MCF 10A (cell line): ENCODE measurements at regions of chr16 and their contacts with region 1.

Region 1: DNA sequence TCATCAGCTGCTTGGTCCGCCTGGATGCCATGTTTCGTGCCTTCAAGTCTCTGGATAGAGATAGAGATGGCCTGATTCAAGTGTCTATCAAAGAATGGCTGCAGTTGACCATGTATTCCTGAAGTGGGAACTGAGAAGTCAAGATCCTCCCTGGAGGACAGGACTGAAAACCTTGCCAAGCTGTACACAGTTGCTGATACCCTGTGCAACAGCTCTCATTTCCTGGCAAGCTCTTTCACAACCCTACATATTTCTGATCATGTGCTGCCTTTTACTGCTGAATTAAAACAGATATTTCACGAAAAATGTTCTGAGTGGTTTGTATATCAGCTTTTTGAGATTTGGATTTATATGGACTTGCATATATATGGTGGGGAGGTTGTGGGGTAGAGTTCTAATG is 898 bp downstream of the CAPNS2 start:
- DNase-seq: peak; percentile 73
- H3K4me3 Mint-ChIP-seq: peak overlapping the region; percentile 59
- H3K27ac Mint-ChIP-seq: peak overlapping the region; percentile 97
- H3K4me1 Mint-ChIP-seq: peaks cover 50% of the 10 kb centered on the region
- H3K27me3 Mint-ChIP-seq: no peaks in the 10 kb centered on the region
- CTCF ChIP-seq: no peak

Region 2: GRCh38 chr16:55552621-55553020 is 14.8 kb before region 1 on chr16:
- CTCF ChIA-PET with region 1: interaction called, 7 read pairs
- POLR2A ChIA-PET with region 1: interaction called, 58 read pairs
- intact Hi-C with region 1: no loop called
- DNase-seq: peak; percentile 78
- H3K4me3 Mint-ChIP-seq: no peak overlapping the region
- H3K27ac Mint-ChIP-seq: peak overlapping the region; percentile 49
- H3K4me1 Mint-ChIP-seq: peaks cover 28% of the 10 kb centered on the region
- H3K27me3 Mint-ChIP-seq: no peaks in the 10 kb centered on the region
- CTCF ChIP-seq: no peak

Region 3: GRCh38 chr16:55577887-55578286 is 10.5 kb after region 1 on chr16:
- CTCF ChIA-PET with region 1: interaction called, 3 read pairs
- POLR2A ChIA-PET with region 1: interaction called, 10 read pairs
- intact Hi-C with region 1: no loop called
- DNase-seq: no peak
- H3K4me3 Mint-ChIP-seq: no peak overlapping the region
- H3K27ac Mint-ChIP-seq: no peak overlapping the region
- H3K4me1 Mint-ChIP-seq: peaks cover 8% of the 10 kb centered on the region
- H3K27me3 Mint-ChIP-seq: no peaks in the 10 kb centered on the region
- CTCF ChIP-seq: no peak

Region 4: DNA sequence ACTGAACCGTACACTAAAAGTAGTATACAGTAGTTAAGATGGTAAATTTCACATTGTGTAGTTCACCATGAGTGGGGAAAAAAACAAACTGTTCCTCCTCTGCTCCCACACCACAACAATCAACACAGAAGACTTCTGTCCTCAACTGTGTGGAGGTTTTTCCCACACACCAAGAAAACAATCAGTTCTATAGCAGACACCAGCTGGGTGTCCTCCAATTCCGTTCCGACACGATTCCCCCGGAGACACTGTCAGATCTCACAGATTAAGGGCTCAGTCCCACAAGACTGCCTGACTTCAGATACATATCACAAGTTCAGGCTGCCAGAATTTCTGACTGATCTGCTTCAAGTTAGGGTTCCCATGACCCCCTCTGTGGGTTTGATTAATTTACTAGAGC is 920.7 kb after region 1 on chr16:
- CTCF ChIA-PET with region 1: no interaction called
- POLR2A ChIA-PET with region 1: no interaction called
- intact Hi-C with region 1: no loop called
- DNase-seq: no peak
- H3K4me3 Mint-ChIP-seq: no peak overlapping the region
- H3K27ac Mint-ChIP-seq: no peak overlapping the region
- H3K4me1 Mint-ChIP-seq: no peaks in the 10 kb centered on the region
- H3K27me3 Mint-ChIP-seq: no peaks in the 10 kb centered on the region
- CTCF ChIP-seq: no peak